Calu3 (cell line): ENCODE measurements at regions of chrX and their contacts with region 1.

Region 1: DNA sequence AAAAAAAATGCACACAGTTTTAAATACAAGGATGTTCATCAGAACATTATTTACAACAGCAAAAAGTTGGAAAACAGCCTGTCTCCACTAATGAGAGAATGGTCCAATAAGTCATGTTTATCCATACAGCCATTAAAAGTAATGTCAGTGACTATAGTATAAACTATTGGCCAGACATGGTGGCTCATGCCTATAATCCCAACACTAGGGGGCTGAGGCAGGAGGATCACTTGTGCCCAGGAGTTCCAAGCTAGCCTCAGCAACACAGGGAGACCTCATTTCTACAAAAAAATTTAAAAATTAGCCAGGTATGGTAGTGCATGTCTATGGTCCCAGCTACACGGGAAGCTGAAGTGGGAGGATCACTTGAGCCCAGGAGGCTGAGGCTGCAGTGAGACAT is 48.1 kb upstream of the IL13RA1 start:
- DNase-seq: no peak
- H3K4me3 Mint-ChIP-seq: no peak overlapping the region
- H3K27ac Mint-ChIP-seq: no peak overlapping the region
- H3K4me1 Mint-ChIP-seq: peaks cover 9% of the 10 kb centered on the region
- H3K27me3 Mint-ChIP-seq: no peaks in the 10 kb centered on the region
- CTCF ChIP-seq: no peak

Region 2: GRCh38 chrX:118655561-118656246 is 23.6 kb before region 1 on chrX:
- CTCF ChIA-PET with region 1: no interaction called
- intact Hi-C with region 1: loop called (anchors 2 kb)
- DNase-seq: peak; percentile 22
- H3K4me3 Mint-ChIP-seq: no peak overlapping the region
- H3K27ac Mint-ChIP-seq: no peak overlapping the region
- H3K4me1 Mint-ChIP-seq: no peaks in the 10 kb centered on the region
- H3K27me3 Mint-ChIP-seq: no peaks in the 10 kb centered on the region
- CTCF ChIP-seq: no peak

Region 3: GRCh38 chrX:118694638-118695037 is 15.3 kb after region 1 on chrX:
- CTCF ChIA-PET with region 1: no interaction called
- intact Hi-C with region 1: no loop called
- DNase-seq: no peak
- H3K4me3 Mint-ChIP-seq: no peak overlapping the region
- H3K27ac Mint-ChIP-seq: no peak overlapping the region
- H3K4me1 Mint-ChIP-seq: no peaks in the 10 kb centered on the region
- H3K27me3 Mint-ChIP-seq: no peaks in the 10 kb centered on the region
- CTCF ChIP-seq: no peak